ENCODE measurements at regions of chr2 and their contacts with region 1.

Region 1: DNA sequence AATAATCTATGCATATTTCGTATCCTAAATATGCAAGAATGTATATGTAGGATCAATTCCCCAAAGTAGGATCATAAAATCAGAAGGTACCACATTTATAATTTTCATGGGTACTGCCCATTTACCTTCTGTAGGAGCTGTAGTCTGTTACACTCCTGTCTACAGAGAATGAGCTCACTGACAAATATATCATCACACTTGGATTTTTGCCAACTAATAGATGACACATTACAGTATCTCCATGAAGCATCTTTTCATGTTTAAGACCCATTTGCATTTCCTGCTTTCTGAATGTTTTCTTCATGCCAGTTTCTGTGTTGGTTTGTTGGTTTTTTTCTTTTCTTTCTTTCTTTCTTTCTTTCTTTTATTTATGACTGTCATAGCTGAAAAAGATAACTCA is 70.9 kb upstream of the EML6 start:
- DNase-seq: no peak
- H3K4me3 ChIP-seq: no peak overlapping the region
- H3K27ac ChIP-seq: no peak overlapping the region
- H3K4me1 ChIP-seq: no peaks in the 10 kb centered on the region
- H3K27me3 ChIP-seq: no peaks in the 10 kb centered on the region
- CTCF ChIP-seq: no peak

Region 2: DNA sequence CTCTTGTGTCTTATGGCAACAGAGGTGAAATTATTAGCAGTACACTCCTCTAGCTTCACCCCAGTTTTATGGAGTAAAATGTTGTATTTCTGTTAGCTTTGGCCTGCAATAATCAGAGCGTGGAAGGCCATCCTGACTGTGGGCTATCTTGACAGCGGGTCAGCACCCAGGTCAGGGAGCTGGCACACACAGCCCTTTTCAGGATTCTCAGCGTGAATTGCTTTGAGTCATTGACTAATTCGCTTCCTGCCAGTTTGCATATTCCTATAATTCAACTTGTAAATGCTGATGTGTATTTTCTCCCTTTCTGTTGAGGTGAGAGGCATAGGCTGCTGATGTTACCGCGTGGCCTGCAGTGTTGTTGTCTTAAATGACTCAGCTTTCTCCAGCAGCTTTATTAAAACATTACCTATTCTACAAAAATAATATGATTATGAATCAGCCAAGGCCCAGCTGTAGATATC is 38.7 kb before region 1 on chr2:
- CTCF ChIA-PET with region 1: no interaction called
- POLR2A ChIA-PET with region 1: interaction called, 10 read pairs
- intact Hi-C with region 1: no loop called
- DNase-seq: peak in 1 of 2 experiments; percentile 72
- H3K4me3 ChIP-seq: no peak overlapping the region
- H3K27ac ChIP-seq: peak overlapping the region; percentile 62
- H3K4me1 ChIP-seq: peaks cover 18% of the 10 kb centered on the region
- H3K27me3 ChIP-seq: no peaks in the 10 kb centered on the region
- CTCF ChIP-seq: no peak

Region 3: DNA sequence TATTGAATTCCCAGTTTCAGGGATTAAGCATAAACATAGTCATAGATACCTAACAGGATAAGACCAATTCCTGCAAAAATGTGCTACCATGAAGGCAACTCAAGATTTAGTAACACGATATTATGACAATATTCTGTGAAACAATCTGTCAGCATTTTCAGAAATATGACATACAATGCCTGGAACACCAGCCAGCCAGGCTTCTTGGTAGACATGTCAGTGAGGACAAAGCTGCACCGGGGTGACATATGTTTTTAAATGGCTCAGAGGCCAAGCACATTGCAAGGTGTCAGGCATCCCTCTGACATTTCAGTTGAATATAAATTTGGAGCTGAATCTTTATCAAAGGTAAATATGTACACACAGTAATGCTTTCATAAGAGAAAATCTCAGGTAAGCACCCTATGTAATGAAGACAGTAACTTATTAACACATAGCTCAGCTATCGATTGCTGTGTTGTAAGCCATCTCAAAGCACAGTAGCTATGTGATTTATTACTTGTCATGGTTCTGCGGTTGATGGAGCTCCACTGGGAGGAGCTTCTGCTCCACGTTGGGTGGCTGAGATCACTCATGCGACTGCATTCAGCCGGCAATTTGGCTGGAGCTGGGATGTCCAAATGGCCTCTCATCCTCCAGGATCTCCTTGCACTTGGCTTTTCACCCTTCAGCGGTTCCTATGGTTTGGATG is 39.0 kb after region 1 on chr2:
- CTCF ChIA-PET with region 1: no interaction called
- POLR2A ChIA-PET with region 1: no interaction called
- intact Hi-C with region 1: no loop called
- DNase-seq: no peak
- H3K4me3 ChIP-seq: no peak overlapping the region
- H3K27ac ChIP-seq: no peak overlapping the region
- H3K4me1 ChIP-seq: no peaks in the 10 kb centered on the region
- H3K27me3 ChIP-seq: no peaks in the 10 kb centered on the region
- CTCF ChIP-seq: no peak

Region 4: DNA sequence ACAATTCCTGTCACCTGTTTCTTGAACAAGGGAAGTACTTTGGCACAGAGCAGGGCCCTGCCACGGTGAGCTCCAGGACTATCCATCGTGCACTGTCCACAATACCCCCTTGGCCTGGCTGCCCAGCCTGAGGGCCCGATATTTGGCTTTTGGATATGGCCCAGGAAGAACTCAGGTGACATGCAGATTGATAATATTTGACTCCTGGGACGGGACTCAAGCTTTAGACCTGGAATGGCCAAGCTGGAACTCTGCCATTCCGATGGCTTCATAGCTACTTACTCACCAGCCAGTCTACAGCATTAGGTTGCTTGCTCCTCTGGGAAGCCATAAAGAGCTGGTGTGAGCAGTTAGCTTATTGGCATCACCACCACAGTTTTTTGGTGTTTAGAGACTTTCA is 97.5 kb after region 1 on chr2:
- CTCF ChIA-PET with region 1: no interaction called
- POLR2A ChIA-PET with region 1: no interaction called
- intact Hi-C with region 1: no loop called
- DNase-seq: no peak
- H3K4me3 ChIP-seq: no peak overlapping the region
- H3K27ac ChIP-seq: no peak overlapping the region
- H3K4me1 ChIP-seq: no peaks in the 10 kb centered on the region
- H3K27me3 ChIP-seq: no peaks in the 10 kb centered on the region
- CTCF ChIP-seq: no peak

Region 5: DNA sequence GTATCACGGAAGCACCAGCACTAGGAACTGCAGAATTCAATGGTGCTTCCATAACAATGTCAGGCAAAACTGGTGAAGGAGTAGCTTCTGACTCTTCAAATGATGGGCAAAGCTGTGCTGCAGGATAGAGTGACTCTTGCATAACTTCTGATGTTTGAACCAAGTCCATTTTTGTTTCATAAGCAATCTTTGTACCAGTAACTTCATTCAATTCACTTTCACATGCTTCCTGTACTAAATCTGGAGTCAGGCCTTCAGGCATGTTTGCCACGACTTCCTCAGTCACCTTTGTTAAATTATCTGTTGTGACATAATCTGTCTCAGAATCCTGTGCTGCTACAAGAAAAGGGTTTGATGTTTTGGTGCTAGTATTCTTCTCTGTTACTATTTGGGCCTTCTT is 373.7 kb after region 1 on chr2:
- CTCF ChIA-PET with region 1: no interaction called
- POLR2A ChIA-PET with region 1: no interaction called
- intact Hi-C with region 1: no loop called
- DNase-seq: no peak
- H3K4me3 ChIP-seq: no peak overlapping the region
- H3K27ac ChIP-seq: peak overlapping the region; percentile 7; the same call in 1 of the 2 replicates
- H3K4me1 ChIP-seq: peaks cover 24% of the 10 kb centered on the region
- H3K27me3 ChIP-seq: no peaks in the 10 kb centered on the region
- CTCF ChIP-seq: no peak

Region 6: GRCh38 chr2:56244911-56245530 is 1592.5 kb after region 1 on chr2:
- CTCF ChIA-PET with region 1: no interaction called
- POLR2A ChIA-PET with region 1: no interaction called
- intact Hi-C with region 1: no loop called
- DNase-seq: no peak
- H3K4me3 ChIP-seq: no peak overlapping the region
- H3K27ac ChIP-seq: no peak overlapping the region
- H3K4me1 ChIP-seq: no peaks in the 10 kb centered on the region
- H3K27me3 ChIP-seq: no peaks in the 10 kb centered on the region
- CTCF ChIP-seq: no peak

Measured in PC-9 (cell line).